Posterior cingulate gyrus (tissue), 11 donors: ENCODE measurements at regions of chr3 and their contacts with region 1.

Region 1: DNA sequence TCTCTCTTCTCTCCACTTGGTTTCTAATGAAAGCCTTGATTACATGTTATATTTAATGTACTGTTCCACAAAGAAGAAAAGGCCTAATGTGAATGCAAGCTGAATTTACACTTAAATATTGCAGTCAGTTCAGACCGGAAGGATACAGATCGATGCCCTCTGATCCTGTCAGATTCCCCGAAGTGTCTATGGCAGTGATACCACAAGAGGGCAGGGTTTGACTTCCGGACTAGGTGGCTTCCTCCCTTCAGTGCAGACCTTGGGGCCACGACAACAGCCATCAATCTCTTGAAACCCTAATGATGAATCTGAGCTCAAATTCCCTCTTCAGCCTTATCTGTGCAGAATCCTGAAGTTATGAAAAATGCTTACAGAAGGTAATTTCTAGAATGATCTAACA is 29.5 kb downstream of the AGTR1 start:
- DNase-seq: peak; percentile 24 to 93 (median 66)

Region 2: GRCh38 chr3:148389916-148390315 is 337.3 kb before region 1 on chr3:
- intact Hi-C with region 1: no loop called
- DNase-seq: no peak

Region 3: DNA sequence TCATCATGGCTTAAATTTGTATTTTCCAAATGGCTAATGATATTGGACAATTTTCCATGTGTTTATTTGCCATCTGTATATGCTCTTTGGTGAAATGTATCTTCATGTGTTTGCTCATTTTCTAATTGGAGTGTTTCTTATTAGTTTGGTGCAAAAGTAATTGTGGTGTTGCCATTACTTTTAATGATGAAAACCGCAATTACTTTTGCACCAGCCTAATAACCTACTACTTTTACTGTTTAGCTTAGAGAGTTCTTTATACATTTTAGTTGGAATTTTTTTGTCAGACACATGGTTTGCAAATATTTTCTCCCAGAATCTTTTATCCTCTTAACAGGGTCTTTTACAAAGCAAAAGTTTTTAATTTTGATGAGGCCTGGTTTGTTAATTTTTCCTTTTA is 170.6 kb before region 1 on chr3:
- intact Hi-C with region 1: no loop called
- DNase-seq: no peak

Region 4: GRCh38 chr3:148861277-148861869 is 134.1 kb after region 1 on chr3:
- intact Hi-C with region 1: loop called (anchors 5 kb)
- DNase-seq: no peak

Region 5: GRCh38 chr3:148991194-148992026 is 264.2 kb after region 1 on chr3 and contains the start of gene GYG1:
- intact Hi-C with region 1: no loop called
- DNase-seq: peak; percentile 58 to 96 (median 75)